Activated CD8-positive, alpha-beta memory T cell treated with anti-CD3 and anti-CD28 coated beads, Interleukin-2, amount 10 ng/mL, durations not matched to agents 7 days and 5 days (primary cell): ENCODE measurements at regions of chr5 and their contacts with region 1.

Region 1: DNA sequence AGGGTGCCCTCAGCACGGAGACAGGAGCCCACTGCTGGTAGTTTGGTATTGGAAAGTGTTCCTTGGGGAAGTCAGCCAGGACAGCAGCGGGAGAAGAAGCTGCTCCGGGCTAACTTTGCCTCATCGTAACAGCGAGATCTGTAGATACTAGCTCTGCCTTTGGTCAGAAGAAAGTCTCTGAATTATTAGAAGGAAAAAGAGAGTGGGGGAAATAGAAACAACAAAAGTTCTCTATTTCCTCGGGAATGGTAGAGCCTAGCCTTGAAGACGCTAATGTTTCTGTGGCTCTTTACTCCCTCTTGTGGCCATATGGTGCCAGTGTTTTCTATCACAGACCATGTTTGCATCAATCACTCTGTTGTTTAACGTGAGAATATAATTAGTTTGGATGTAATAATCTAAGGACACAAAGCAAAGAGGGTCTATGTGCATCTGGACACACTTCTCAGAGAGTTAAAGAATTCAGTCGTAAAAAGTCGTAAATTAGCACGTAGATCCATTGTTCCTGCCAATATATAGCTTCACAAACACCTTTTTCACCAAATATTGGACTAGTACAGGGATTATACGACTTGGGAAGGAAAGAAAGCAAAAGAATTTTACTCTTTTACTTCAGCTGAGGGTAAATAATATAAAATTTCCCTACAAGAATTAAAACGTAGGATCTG is 40.2 kb upstream of the HSD17B4 start:
- DNase-seq: peak; percentile 70
- ATAC-seq: peak; percentile 91
- H3K4me3 Mint-ChIP-seq: peak overlapping the region; percentile 76
- H3K27ac Mint-ChIP-seq: peak overlapping the region; percentile 50
- H3K4me1 Mint-ChIP-seq: peaks cover 31% of the 10 kb centered on the region
- H3K27me3 Mint-ChIP-seq: peaks cover 5% of the 10 kb centered on the region

Region 2: DNA sequence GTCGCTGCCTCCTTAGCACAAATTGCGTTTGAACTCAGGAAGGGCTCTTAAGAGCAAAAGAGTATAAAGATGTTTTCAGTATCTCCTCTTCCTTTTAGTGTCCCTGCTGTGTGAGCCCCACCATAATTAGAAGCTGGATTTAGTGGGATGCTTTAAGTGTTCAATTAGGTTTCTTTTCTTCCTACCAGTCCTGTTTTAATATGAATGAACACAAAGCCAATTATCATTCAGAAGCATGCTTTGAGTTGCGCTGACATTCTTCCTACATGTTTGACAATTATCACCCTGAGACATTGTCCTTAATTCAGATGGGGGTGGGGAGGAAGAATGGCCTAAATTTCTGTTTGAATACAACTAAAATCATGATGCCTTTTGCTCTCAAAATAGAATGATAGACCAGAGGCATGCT is 961.1 kb before region 1 on chr5:
- CTCF ChIA-PET with region 1: no interaction called
- DNase-seq: no peak
- ATAC-seq: no peak
- H3K4me3 Mint-ChIP-seq: no peak overlapping the region
- H3K27ac Mint-ChIP-seq: no peak overlapping the region
- H3K4me1 Mint-ChIP-seq: no peaks in the 10 kb centered on the region
- H3K27me3 Mint-ChIP-seq: no peaks in the 10 kb centered on the region

Region 3: GRCh38 chr5:118987988-118988865 is 423.8 kb before region 1 on chr5 and contains the start of gene DTWD2:
- CTCF ChIA-PET with region 1: interaction called, 112 read pairs
- DNase-seq: peak; percentile 92
- ATAC-seq: peak; percentile 95
- H3K4me3 Mint-ChIP-seq: peak within 1 kb of the TSS; percentile 75
- H3K27ac Mint-ChIP-seq: peak within 1 kb of the TSS; percentile 59
- H3K4me1 Mint-ChIP-seq: peaks cover 13% of the 10 kb centered on the region
- H3K27me3 Mint-ChIP-seq: no peaks in the 10 kb centered on the region
- total RNA-seq, gene DTWD2: 1.5 to 2.6 TPM

Region 4: GRCh38 chr5:119028575-119028974 is 383.5 kb before region 1 on chr5:
- CTCF ChIA-PET with region 1: interaction called, 31 read pairs
- DNase-seq: no peak
- ATAC-seq: no peak
- H3K4me3 Mint-ChIP-seq: no peak overlapping the region
- H3K27ac Mint-ChIP-seq: no peak overlapping the region
- H3K4me1 Mint-ChIP-seq: peaks cover 16% of the 10 kb centered on the region
- H3K27me3 Mint-ChIP-seq: no peaks in the 10 kb centered on the region

Region 5: DNA sequence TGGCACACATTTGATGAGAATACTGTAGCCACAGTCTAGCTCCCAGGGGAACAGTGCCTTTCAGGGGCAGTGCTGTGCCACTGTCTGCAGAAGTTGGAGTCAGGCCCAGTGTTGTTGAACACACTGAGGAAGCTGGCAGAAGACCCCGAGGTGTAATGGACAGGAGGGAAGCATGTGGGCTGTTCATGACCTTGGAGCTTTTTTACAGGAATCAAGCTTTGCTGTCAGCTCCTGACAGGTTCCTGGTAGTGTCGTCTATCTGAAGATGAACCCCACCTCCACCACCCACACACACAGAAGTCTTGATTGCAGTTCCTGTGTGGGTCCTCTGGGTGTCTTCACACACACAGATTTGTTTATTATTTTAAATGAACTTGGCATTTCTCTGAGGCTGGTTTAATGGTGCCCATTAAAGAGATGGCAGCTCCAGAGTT is 96.5 kb before region 1 on chr5:
- CTCF ChIA-PET with region 1: interaction called, 46 read pairs
- DNase-seq: peak; percentile 76
- ATAC-seq: peak; percentile 73
- H3K4me3 Mint-ChIP-seq: no peak overlapping the region
- H3K27ac Mint-ChIP-seq: peak overlapping the region; percentile 83
- H3K4me1 Mint-ChIP-seq: peaks cover 90% of the 10 kb centered on the region
- H3K27me3 Mint-ChIP-seq: no peaks in the 10 kb centered on the region

Region 6: DNA sequence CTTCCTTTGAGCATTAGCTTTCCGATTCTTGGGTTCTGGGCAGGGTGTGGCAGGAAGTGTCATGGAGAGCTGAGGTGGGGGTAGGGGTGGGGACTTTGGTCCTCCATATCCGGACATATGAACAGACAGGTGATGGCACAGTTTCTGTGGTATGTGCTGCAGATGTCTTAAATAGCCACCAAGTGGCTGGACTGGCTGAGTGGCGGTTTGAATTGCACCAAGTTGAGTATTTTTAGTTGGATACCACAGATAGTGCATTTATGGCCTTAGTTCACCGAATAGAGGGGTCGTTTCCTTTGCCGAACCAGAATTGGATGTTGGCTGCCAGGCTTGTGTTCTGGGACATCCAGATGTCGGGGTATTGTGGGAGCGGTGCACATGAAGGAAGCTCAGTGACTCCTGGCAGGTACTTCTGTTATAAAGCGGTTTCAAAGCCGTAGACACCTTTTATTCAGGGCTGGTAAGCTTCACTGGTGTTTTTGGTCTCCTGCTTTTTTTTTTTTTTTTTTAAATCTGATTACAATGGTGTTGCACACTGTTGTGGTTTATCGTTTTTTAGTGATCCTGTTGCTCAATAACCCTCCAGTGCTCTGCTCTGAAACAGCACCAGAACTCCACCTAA is 71.4 kb before region 1 on chr5:
- CTCF ChIA-PET with region 1: interaction called, 14 read pairs
- DNase-seq: peak; percentile 93
- ATAC-seq: peak; percentile 65
- H3K4me3 Mint-ChIP-seq: peak overlapping the region; percentile 77
- H3K27ac Mint-ChIP-seq: peak overlapping the region; percentile 95
- H3K4me1 Mint-ChIP-seq: peaks cover 92% of the 10 kb centered on the region
- H3K27me3 Mint-ChIP-seq: no peaks in the 10 kb centered on the region

Region 7: GRCh38 chr5:119397518-119398380 is 14.3 kb before region 1 on chr5:
- CTCF ChIA-PET with region 1: interaction called, 26 read pairs
- DNase-seq: no peak
- ATAC-seq: peak; percentile 72
- H3K4me3 Mint-ChIP-seq: peak overlapping the region; percentile 17
- H3K27ac Mint-ChIP-seq: peak overlapping the region; percentile 52
- H3K4me1 Mint-ChIP-seq: peaks cover 55% of the 10 kb centered on the region
- H3K27me3 Mint-ChIP-seq: no peaks in the 10 kb centered on the region